CD4-positive, alpha-beta memory T cell (primary cell): ENCODE measurements at regions of chr1 and their contacts with region 1.

Region 1: DNA sequence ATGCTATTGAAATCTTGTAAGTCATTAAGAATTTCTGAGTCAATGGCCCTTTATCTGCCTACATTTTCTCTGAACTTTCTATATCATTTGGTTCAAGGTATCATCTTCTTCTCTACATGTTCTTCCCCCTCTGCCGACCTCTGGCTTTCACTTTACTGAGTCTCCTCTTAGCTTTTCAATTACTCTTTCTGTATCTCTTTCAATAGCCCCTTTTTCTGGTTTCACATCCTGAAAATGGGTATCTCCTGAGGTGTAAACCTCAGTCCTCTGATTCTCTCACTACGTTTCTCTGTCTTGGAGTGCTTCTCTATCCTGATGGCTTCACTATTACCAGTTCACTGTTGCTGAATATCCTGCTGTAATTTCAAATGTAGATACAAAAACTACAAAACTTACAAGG is 98.9 kb downstream of the LYST start:
- DNase-seq: no peak
- H3K4me3 ChIP-seq: no peak overlapping the region
- H3K4me3 Mint-ChIP-seq: no peak overlapping the region
- H3K27ac ChIP-seq: no peak overlapping the region
- H3K27ac Mint-ChIP-seq: no peak overlapping the region
- H3K4me1 ChIP-seq: no peaks in the 10 kb centered on the region
- H3K4me1 Mint-ChIP-seq: no peaks in the 10 kb centered on the region
- H3K27me3 ChIP-seq: no peaks in the 10 kb centered on the region
- H3K27me3 Mint-ChIP-seq: no peaks in the 10 kb centered on the region

Region 2: GRCh38 chr1:235783148-235783776 is 15.5 kb after region 1 on chr1:
- CTCF ChIA-PET with region 1: interaction called, 12 read pairs
- POLR2A ChIA-PET with region 1: no interaction called
- intact Hi-C with region 1: no loop called
- DNase-seq: peak in 4 of 5 donors; percentile 8 to 30 (median 9)
- H3K4me3 ChIP-seq: no peak overlapping the region
- H3K4me3 Mint-ChIP-seq: no peak overlapping the region
- H3K27ac ChIP-seq: no peak overlapping the region
- H3K27ac Mint-ChIP-seq: no peak overlapping the region
- H3K4me1 ChIP-seq: no peaks in the 10 kb centered on the region
- H3K4me1 Mint-ChIP-seq: no peaks in the 10 kb centered on the region
- H3K27me3 ChIP-seq: no peaks in the 10 kb centered on the region
- H3K27me3 Mint-ChIP-seq: no peaks in the 10 kb centered on the region